CD4-positive, alpha-beta T cell (primary cell): ENCODE measurements at regions of chr3 and their contacts with region 1.

Region 1: GRCh38 chr3:18591120-18591519 is 166.0 kb upstream of the SATB1 start:
- DNase-seq: no peak
- ATAC-seq: no peak
- H3K4me3 ChIP-seq: no peak overlapping the region
- H3K4me3 Mint-ChIP-seq: no peak overlapping the region
- H3K27ac ChIP-seq: no peak overlapping the region
- H3K27ac Mint-ChIP-seq: no peak overlapping the region
- H3K4me1 ChIP-seq: no peaks in the 10 kb centered on the region
- H3K4me1 Mint-ChIP-seq: no peaks in the 10 kb centered on the region
- H3K27me3 ChIP-seq: no peaks in the 10 kb centered on the region
- H3K27me3 Mint-ChIP-seq: no peaks in the 10 kb centered on the region
- CTCF ChIP-seq: no peak

Region 2: GRCh38 chr3:18635215-18635614 is 44.1 kb after region 1 on chr3:
- CTCF ChIA-PET with region 1: no interaction called
- POLR2A ChIA-PET with region 1: no interaction called
- intact Hi-C with region 1: loop called in 1 of 2 experiments (anchors 5 kb)
- DNase-seq: no peak
- ATAC-seq: no peak
- H3K4me3 ChIP-seq: no peak overlapping the region
- H3K4me3 Mint-ChIP-seq: no peak overlapping the region
- H3K27ac ChIP-seq: no peak overlapping the region
- H3K27ac Mint-ChIP-seq: no peak overlapping the region
- H3K4me1 ChIP-seq: no peaks in the 10 kb centered on the region
- H3K4me1 Mint-ChIP-seq: no peaks in the 10 kb centered on the region
- H3K27me3 ChIP-seq: no peaks in the 10 kb centered on the region
- H3K27me3 Mint-ChIP-seq: no peaks in the 10 kb centered on the region
- CTCF ChIP-seq: no peak